Activated CD4-positive, alpha-beta T cell treated with anti-CD3 and anti-CD28 coated beads, Interleukin-2, amount 10 ng/mL, durations not matched to agents 24 days and 14 days (primary cell): ENCODE measurements at regions of chr6 and their contacts with region 1.

Region 1: DNA sequence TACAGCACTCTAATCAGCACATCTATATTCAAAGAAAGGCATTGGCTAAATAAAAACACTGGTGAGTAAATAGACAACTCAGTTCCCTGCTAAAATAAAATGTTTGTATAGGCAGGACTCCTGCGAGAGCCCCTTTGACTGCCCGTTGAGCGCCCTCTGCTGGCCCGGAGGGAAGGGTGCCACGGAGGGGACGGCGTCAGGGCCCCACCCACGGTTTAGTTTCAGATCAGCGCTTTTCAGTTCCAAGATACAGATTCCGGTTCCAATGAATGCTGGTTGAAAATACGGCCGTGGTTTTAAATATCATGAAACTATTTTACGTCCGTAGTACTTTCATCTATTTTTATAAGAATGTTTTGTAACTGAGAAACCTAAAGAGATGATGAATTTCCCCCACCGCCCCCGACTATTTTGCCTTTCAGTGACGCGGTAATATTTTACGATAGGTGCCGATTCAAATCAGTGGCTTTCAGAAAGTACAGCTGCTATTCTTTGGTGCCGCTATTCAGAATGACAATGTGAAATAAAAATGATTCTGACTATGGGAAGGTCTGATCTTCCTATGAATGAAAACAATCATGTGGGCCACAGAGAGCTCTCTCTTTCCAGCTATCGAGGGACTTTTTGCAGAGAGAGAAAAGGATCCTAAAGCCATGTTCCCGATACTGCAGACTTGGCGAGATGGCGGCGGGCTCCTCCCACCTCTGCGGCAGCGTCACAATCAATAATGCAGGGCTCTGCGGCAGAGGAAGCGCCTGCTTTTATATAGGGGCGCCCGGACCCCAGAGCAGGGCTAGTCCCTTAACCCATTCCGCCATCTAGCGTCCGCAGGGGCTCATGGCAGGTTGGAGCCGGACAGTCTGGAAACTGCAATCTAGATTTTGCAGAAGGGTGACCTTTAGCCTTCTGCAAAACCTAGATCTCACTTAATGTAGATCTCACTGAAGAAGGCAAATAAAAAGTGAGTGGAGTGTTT is 10.6 kb upstream of the CCN6 start:
- DNase-seq: peak; percentile 97
- H3K4me3 Mint-ChIP-seq: peak overlapping the region; percentile 93
- H3K27ac Mint-ChIP-seq: peak overlapping the region; percentile 96
- H3K4me1 Mint-ChIP-seq: peaks cover 24% of the 10 kb centered on the region
- H3K27me3 Mint-ChIP-seq: no peaks in the 10 kb centered on the region

Region 2: DNA sequence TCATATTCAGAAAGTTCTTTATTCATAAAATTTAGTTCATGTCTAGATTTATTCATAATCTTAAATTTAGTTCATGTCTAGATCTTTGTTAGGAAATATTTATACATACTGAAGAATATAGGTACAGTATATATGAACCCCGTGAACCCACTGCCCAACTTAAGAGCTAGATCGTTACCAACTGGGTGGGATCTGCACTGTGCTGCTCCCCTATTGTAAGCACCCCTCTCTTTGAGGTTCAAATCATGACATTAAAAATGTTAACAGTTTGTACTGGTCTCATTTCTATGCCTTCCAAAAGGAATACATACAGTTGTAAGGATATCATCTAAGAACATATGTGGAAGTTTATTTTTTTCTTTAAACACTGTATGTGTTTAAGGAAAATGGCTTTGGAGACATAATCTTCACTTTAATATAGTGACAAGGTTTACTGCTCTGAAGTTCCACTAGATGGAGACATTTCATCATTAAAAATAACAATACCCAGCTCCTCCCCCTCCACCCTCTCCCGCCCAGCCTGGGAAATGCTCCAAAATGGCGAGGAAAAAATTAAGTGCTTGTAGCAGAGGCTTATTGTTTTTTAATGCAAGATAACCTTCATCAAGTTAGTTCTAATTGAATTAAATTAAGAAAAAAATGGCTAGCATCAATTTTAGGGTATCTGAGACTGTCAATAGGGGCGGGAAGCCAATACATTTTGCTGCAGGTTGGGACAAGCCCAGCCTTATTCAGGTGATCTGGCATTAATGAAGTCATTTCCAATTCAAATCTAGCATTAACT is 333.5 kb before region 1 on chr6:
- intact Hi-C with region 1: loop called (anchors 1 kb)
- DNase-seq: peak; percentile 85
- H3K4me3 Mint-ChIP-seq: no peak overlapping the region
- H3K27ac Mint-ChIP-seq: peak overlapping the region; percentile 59
- H3K4me1 Mint-ChIP-seq: peaks cover 56% of the 10 kb centered on the region
- H3K27me3 Mint-ChIP-seq: no peaks in the 10 kb centered on the region

Region 3: DNA sequence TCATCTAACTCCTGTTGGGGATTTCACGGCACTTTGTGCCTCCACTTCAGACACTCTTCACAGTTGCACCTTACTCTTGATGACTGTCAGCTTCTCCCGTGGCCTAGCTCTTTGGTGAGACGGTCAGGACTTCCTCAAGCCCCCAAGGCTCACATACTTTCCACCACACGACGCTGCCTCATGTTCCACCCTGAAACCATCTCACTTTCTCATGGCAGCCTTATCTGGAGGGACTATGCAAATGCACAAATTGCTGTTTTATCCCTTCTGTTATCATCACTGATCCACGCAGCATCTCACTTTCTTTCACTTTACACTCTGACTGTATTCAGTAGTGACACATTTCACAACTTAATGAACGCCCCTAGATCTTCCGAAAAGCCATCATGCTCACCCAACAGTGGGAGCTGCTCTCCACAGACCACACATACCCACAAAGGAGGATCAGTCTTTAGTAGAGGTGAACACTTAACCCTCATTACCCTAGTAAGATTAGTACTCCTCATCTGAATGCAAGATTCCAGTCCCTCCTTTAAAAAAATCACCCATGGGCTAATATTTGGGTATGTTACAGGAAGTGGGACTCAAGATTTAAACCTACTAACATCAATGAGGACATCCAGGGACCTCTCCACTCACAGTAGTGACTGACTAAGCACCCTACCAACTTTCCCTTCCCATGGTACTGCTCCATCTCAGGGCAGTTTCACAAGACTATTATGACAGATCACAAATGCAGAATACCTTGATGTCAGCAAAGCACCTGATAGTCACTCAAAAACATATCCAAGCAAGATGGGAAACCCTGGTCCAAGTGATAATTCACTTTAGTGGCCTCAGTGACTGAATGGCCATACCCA is 205.4 kb before region 1 on chr6:
- intact Hi-C with region 1: loop called (anchors 1 kb)
- DNase-seq: peak; percentile 86
- H3K4me3 Mint-ChIP-seq: peak overlapping the region; percentile 75
- H3K27ac Mint-ChIP-seq: peak overlapping the region; percentile 96
- H3K4me1 Mint-ChIP-seq: peaks cover 64% of the 10 kb centered on the region
- H3K27me3 Mint-ChIP-seq: no peaks in the 10 kb centered on the region

Region 4: DNA sequence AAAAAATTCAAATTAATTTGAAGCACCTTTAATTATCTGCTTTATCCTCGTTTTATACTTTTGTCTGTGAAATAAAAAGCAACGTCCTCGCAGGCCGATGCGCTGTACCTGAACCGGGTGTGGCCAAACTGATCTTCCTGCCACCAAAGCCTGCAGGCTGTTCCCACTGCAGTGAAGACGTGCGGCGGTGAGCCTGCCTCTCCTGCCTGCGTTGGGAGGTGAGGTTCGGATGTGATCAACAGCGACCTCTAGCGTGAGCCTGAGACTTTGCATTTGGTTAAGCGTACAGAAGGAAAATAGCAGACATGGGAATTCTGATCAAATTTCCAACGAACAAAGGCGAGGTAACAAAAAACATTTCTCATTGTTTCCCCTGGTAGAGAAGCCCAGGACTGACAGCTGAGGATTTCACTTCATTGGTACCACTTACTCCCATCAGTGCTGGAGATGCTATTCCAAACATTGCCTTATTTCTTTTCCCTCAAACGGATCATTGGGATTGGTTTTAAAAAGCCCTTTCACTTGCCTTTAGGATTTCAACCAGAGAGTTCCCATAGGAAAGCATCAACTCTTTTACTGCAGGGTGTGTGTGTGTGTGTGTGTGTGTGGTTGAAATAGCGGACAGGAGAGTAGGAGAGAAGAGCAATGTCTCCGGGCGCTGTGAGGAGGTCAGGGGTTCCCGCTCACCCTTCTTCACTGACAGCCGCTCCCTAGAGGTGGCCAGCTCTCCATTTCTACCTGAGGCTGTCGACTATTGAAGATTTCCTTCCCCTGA is 46.1 kb before region 1 on chr6:
- intact Hi-C with region 1: loop called (anchors 1 kb)
- DNase-seq: peak; percentile 93
- H3K4me3 Mint-ChIP-seq: peak overlapping the region; percentile 64
- H3K27ac Mint-ChIP-seq: no peak overlapping the region
- H3K4me1 Mint-ChIP-seq: peaks cover 40% of the 10 kb centered on the region
- H3K27me3 Mint-ChIP-seq: no peaks in the 10 kb centered on the region

Region 5: GRCh38 chr6:112016320-112016719 is 27.0 kb before region 1 on chr6:
- intact Hi-C with region 1: loop called (anchors 1 kb)
- DNase-seq: peak; percentile 71
- H3K4me3 Mint-ChIP-seq: peak overlapping the region; percentile 33
- H3K27ac Mint-ChIP-seq: peak overlapping the region; percentile 90
- H3K4me1 Mint-ChIP-seq: peaks cover 52% of the 10 kb centered on the region
- H3K27me3 Mint-ChIP-seq: no peaks in the 10 kb centered on the region

Region 6: DNA sequence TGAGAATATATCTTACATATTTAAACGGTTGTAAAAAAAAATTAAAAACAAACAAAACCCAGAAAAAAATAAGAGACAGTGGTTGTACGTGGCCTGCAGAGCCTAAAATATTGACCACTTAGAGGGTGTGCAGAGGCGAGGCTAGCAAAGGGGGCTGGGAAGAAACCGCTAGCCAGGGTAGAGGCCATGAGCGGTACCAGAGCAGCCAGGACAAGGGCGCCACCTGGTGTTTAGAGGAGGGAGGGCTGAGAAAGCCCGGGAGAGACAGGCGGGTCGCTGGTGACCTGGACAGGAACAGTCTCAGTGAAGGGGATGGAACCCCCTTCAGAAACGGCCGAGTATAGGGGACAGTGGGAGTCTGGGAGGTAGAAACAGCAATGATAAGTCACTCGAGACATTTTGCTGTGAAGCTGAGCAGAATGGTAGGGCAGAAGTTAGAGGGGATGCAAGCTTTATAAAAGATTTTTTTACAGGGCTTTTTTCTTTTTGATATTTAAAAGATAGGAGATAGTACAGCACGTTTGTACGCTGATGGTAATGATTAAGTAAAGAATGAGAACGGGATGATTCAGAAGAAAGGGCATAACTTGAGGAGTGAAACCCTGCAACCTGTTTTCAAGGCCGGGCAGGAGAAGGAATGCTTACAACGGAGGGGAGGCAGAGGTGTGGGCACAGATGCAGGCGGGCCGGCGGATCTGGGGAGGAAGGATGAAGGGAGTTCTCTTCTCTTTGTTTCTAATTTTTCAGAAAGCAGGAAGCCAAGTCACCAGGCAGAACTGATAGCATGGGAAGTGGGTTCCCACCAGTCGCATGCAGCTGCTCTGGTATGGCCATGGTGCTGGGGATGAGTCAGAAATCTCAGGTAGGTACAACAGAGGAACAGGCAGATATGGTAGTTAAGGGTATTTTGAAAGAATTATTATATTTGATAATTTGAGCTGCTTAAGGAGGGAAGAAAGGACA is 120.3 kb after region 1 on chr6:
- intact Hi-C with region 1: loop called (anchors 1 kb)
- DNase-seq: peak; percentile 93
- H3K4me3 Mint-ChIP-seq: peak overlapping the region; percentile 45
- H3K27ac Mint-ChIP-seq: no peak overlapping the region
- H3K4me1 Mint-ChIP-seq: peaks cover 16% of the 10 kb centered on the region
- H3K27me3 Mint-ChIP-seq: peaks cover 58% of the 10 kb centered on the region